GM10248 (cell line): ENCODE measurements at regions of chr13 and their contacts with region 1.

Region 1: DNA sequence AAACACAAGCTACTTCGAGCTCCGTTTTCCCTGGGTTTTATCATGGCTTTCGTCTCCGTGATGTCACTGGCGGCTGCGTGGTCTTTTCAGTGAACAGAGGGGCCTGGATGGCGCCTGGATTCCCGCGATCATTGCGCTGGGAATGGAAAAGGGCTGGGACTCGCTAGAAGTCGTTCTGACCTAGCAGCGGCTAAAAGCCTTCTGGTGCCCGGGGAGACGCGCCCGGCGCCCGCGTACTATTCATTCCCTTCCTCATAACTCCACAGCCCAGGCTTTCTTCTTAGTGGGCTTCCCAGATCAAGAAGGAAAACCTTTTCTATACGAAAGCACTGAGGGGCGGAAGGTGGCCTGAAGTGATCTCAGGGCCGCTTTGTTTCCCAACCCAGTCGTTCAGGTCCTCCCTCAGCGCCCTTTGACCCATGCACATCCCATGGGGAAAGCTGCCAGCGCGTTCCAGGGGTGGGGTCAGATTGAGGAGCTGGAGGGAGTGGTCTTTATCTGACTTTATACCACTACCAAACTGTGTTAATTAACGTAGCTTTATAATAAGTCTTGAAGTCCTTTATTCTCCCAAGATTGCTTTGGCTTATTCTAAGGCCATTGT is 96.6 kb downstream of the ELF1 start:
- DNase-seq: no peak
- CTCF ChIP-seq: no peak

Region 2: GRCh38 chr13:40910324-40911050 is 12.1 kb before region 1 on chr13:
- CTCF ChIA-PET with region 1: interaction called, 11 read pairs
- POLR2A ChIA-PET with region 1: interaction called, 4 read pairs
- DNase-seq: no peak
- CTCF ChIP-seq: no peak

Region 3: DNA sequence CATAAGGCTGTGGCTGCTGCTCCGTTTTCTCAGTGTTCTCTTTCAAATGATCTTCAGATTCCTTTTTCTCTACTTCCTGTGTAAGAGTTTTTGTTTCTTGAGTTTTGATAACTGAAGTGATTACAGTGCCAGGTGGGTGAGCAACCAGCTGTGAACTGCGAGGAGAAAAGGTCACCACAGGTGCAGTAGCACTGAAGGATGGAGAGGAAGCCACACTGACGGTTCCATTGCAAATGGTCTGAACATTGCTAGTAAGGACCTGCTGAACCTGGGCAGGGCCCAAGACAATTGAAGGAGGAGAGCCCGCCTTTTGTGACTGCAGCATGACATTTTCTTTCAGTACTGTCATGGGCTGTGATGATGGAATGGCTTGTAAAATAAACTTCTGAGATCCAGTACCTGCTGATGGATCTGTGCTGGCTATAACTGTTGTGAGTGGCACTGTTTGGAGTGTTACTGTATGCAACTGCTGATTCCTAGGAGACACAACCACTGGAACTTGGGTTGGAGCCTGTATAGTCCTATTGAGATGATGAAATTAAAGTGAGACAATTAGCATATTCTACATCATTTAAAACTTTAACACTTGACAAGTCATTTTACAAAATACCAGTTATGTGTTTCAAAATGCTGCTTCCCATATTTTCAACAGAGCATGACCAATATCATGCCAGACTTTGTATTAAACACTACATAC is 11.1 kb after region 1 on chr13:
- CTCF ChIA-PET with region 1: interaction called, 17 read pairs
- POLR2A ChIA-PET with region 1: interaction called, 3 read pairs
- DNase-seq: peak; percentile 28
- CTCF ChIP-seq: no peak